PC-9 (cell line): ENCODE measurements at regions of chr6 and their contacts with region 1.

Region 1: DNA sequence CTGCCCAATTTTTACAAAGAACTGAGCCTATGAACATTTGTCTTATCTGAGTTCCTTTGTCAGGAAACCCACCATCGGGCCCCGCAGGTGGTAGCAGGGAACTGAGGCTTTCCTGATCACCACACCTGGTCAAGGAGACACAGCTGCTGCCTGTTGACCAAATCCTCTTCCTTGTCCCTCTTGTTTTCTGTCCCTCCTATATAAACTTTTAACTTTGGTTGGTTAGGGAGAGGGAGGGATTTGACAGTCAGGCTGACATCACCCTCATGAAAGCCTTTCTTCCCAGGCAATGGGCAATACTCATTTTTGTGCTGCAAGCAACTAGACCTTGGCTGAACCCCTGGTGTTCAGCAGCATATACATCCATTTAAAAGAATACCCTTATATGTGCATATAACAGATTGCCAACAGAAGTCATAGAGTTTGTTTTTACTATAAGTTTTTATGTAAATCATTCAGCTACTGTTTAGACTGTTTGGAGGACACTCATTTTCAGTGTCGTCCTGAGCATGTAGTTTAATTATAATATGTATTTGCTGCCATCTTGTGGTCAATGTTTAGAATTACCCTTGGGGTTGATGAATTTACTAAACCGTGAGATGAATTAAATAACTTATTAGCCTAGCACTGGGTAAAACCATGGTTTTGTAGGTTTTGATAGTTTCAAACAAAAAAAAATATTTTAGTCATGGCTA is 17.0 kb downstream of the CRISP1 start:
- DNase-seq: peak; percentile 5 to 43
- H3K4me3 ChIP-seq: no peak overlapping the region
- H3K27ac ChIP-seq: no peak overlapping the region
- H3K4me1 ChIP-seq: no peaks in the 10 kb centered on the region
- H3K27me3 ChIP-seq: no peaks in the 10 kb centered on the region
- CTCF ChIP-seq: peak; percentile 83

Region 2: GRCh38 chr6:49384904-49385303 is 464.5 kb before region 1 on chr6:
- CTCF ChIA-PET with region 1: no interaction called
- POLR2A ChIA-PET with region 1: no interaction called
- intact Hi-C with region 1: no loop called
- DNase-seq: no peak
- H3K4me3 ChIP-seq: no peak overlapping the region
- H3K27ac ChIP-seq: no peak overlapping the region
- H3K4me1 ChIP-seq: no peaks in the 10 kb centered on the region
- H3K27me3 ChIP-seq: no peaks in the 10 kb centered on the region
- CTCF ChIP-seq: no peak

Region 3: GRCh38 chr6:49531774-49532569 is 317.4 kb before region 1 on chr6:
- CTCF ChIA-PET with region 1: interaction called, 6 read pairs
- POLR2A ChIA-PET with region 1: no interaction called
- intact Hi-C with region 1: loop called (anchors 1 kb)
- DNase-seq: peak in 1 of 2 experiments; percentile 79
- H3K4me3 ChIP-seq: peak overlapping the region; percentile 30; the same call in 1 of the 2 replicates
- H3K27ac ChIP-seq: no peak overlapping the region
- H3K4me1 ChIP-seq: 0 out of 2 replicates have a peak, but pooled peaks cover 5% of the 10 kb centered on the region
- H3K27me3 ChIP-seq: no peaks in the 10 kb centered on the region
- CTCF ChIP-seq: peak; percentile 84